Aorta (tissue), 5 donors: ENCODE measurements at regions of chr21 and their contacts with region 1.

Region 1: GRCh38 chr21:34888569-34889319 is 160.4 kb downstream of the RUNX1 start:
- DNase-seq: peak; percentile 97
- ATAC-seq: peak; percentile 91
- H3K4me3 ChIP-seq: peak overlapping the region; percentile 63 to 68
- H3K27ac ChIP-seq: peak overlapping the region in 1 of 2 donors; percentile 48
- H3K4me1 ChIP-seq: no peaks in the 10 kb centered on the region
- H3K27me3 ChIP-seq: no peaks in the 10 kb centered on the region

Region 2: DNA sequence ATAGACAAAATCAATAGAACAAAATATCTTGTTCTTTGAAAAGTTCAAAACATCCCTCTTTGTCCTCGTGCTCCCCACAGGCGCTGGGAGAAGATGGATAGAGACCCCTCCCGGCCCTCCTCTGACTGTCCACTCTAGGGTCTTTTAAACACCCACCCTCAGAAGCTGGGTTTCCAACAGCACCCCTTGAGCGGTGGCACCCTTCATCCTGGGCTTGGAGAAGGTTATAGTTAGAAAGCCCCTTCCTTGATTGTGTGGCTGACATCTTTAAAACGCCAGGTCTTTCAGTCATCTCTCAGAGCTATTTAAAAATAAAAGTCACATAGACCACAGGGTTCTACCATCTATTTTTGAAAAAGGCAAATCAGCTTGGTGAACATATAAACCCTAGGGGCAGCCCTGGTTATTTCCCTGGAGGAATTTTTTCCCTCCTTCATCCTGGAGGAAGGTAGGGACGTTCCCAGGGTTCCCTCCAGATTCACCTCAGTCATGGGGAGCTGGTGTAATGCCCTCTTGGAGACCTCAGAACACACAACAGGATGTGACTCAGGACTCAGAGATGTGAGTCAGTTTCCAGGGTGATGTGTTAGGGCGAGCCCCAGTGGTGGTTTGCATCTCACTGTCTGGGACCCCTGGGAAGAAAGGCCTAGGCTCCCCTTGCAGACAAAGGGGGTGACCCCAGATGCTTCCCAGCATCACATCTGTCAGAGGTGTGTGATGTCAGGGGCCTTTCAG is 81.4 kb before region 1 on chr21:
- intact Hi-C with region 1: loop called in 1 of 2 experiments (anchors 5 kb)
- DNase-seq: peak in 1 of 2 donors; percentile 67
- ATAC-seq: peak; percentile 29
- H3K4me3 ChIP-seq: no peak overlapping the region
- H3K27ac ChIP-seq: peak overlapping the region in 1 of 2 donors; percentile 34
- H3K4me1 ChIP-seq: no peaks in the 10 kb centered on the region
- H3K27me3 ChIP-seq: no peaks in the 10 kb centered on the region

Region 3: DNA sequence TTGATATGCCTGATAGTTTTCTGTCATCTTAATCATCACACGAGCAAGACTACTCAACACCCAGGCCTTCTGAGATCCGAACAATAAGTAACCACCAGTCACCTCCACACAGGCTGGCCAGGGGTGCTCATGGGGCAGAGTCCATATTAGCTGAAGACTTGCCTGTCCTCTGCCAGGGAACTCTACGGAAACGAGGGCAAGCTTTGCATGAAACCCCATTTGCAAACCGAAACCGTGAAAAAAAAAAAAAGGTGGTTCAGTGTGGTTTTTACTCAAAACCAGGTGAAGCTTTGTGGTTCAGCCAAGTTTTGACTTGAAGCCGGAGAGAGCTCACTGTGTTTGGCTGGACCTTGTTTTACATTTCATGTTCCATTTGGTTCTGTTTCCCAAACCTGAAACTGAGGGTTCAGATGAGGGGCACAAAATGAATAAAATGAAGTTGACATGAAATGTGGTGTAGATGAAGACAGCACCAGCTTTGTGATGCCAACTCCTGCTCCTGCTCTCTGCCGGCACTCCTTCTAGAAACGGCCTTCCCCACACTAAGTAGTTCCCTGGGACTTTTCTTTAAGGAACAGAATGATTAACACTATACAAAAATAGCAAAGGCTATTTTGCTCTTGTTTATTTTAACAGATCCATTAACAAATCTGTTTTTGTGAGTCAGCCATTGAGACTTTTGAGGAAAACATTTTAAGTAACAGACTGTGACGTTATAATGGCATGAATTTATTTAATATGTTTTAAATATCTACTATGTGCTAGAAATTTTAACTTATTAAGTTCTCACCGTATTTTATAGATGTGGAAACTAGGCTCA is 85.6 kb after region 1 on chr21:
- intact Hi-C with region 1: no loop called
- DNase-seq: no peak
- ATAC-seq: no peak
- H3K4me3 ChIP-seq: no peak overlapping the region
- H3K27ac ChIP-seq: no peak overlapping the region
- H3K4me1 ChIP-seq: no peaks in the 10 kb centered on the region
- H3K27me3 ChIP-seq: no peaks in the 10 kb centered on the region

Region 4: GRCh38 chr21:35204850-35205541 is 316.3 kb after region 1 on chr21:
- intact Hi-C with region 1: loop called (anchors 5 kb)
- DNase-seq: peak; percentile 88 to 91
- ATAC-seq: peak; percentile 72
- H3K4me3 ChIP-seq: peak overlapping the region in 1 of 2 donors; percentile 23
- H3K27ac ChIP-seq: peak overlapping the region in 1 of 2 donors; percentile 25
- H3K4me1 ChIP-seq: peaks cover 0 to 6% of the 10 kb centered on the region in 2 donors
- H3K27me3 ChIP-seq: no peaks in the 10 kb centered on the region

Region 5: GRCh38 chr21:35324372-35325220 is 435.9 kb after region 1 on chr21:
- intact Hi-C with region 1: loop called in 1 of 2 experiments (anchors 5 kb)
- DNase-seq: no peak
- ATAC-seq: peak; percentile 34
- H3K4me3 ChIP-seq: no peak overlapping the region
- H3K27ac ChIP-seq: peak overlapping the region; percentile 37 to 99
- H3K4me1 ChIP-seq: peaks cover 2 to 17% of the 10 kb centered on the region in 2 donors
- H3K27me3 ChIP-seq: no peaks in the 10 kb centered on the region

Region 6: GRCh38 chr21:35616090-35616489 is 727.3 kb after region 1 on chr21:
- intact Hi-C with region 1: loop called in 1 of 2 experiments (anchors 5 kb)
- DNase-seq: no peak
- ATAC-seq: no peak
- H3K4me3 ChIP-seq: no peak overlapping the region
- H3K27ac ChIP-seq: no peak overlapping the region
- H3K4me1 ChIP-seq: no peaks in the 10 kb centered on the region
- H3K27me3 ChIP-seq: no peaks in the 10 kb centered on the region

Region 7: GRCh38 chr21:35850029-35850428 is 961.3 kb after region 1 on chr21:
- intact Hi-C with region 1: loop called in 1 of 2 experiments (anchors 5 kb)
- DNase-seq: no peak
- ATAC-seq: peak; percentile 82
- H3K4me3 ChIP-seq: no peak overlapping the region
- H3K27ac ChIP-seq: peak overlapping the region in 1 of 2 donors; percentile 77
- H3K4me1 ChIP-seq: no peaks in the 10 kb centered on the region
- H3K27me3 ChIP-seq: no peaks in the 10 kb centered on the region

Region 8: DNA sequence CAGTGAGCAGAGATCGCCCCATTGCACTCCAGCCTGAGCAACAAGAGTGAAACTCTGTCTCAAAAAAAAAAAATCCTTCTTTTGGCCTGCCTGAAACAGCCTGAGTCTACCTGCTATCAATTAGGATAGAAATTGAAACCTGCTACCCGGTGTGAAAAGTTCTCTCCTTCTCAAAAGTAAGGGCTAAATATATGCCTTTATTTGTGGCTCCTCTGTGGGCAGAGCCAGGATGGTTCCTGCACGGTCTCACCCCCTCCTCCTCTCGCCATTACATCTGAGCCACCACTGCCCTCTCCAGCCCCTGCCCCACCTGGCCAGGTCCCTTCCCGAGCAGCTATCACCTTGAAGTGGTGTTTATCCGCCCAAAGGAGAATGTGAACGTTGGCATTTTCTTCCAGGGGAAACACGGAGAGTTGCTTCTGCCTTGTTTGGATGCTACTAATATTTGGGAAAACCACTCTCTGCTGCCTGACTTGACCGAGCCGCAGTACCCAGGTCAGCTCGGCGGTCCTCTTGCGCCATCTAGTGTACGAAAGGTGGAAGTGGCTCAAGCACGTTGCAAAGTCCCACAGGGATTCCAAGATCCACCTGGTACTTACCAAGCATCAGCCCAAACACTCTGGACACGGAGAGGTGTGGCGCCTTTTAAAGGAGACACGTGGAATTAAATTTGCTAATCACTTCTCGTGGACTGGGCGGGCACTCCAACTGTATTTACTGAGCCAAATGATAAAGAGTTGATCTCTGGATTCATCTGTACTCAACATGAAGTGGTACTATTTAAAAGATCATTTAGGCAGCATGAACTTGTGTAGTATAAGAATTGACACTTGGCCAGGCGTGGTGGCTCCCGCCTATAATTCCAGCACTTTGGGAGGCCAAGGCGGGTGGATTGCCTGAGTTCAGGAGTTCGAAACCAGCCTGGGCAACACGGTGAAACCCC is 1139.7 kb after region 1 on chr21:
- intact Hi-C with region 1: loop called in 1 of 2 experiments (anchors 10 kb)
- DNase-seq: peak; percentile 74 to 85
- ATAC-seq: peak; percentile 89
- H3K4me3 ChIP-seq: no peak overlapping the region
- H3K27ac ChIP-seq: no peak overlapping the region
- H3K4me1 ChIP-seq: no peaks in the 10 kb centered on the region
- H3K27me3 ChIP-seq: no peaks in the 10 kb centered on the region